ENCODE measurements at regions of chr1 and their contacts with region 1.

Region 1: GRCh38 chr1:42469727-42470126 is 6.6 kb downstream of the CCDC30 start:
- DNase-seq: no peak

Region 2: DNA sequence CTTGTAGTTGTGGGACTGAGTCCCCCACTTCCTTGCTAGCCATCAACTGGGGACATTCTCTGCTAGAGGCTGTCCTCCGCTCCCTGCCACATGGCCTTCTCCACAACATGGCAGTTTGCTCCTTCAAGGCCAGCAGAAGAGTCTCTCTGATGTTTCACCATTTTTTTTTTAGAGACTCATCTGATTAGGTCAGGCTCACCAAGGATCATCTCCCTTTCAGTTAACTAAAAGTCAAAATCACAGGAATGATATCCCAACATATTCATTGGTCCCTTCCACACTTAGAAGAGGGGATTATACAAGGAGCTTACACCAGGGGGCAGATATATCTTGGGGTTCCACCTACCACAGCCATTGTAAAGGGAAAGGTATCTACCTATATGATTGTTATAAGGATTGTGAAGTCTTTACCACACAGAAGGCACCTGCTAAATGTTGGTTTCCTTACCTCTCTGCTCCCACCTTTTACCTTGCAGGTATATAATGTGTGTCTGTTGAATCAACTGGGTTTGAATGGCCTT is 65.8 kb before region 1 on chr1:
- intact Hi-C with region 1: loop called in 1 of 2 experiments (anchors 2 kb)
- DNase-seq: no peak

Measured in posterior vena cava (tissue), 2 donors.